ENCODE measurements at regions of chr2 and their contacts with region 1.

Region 1: DNA sequence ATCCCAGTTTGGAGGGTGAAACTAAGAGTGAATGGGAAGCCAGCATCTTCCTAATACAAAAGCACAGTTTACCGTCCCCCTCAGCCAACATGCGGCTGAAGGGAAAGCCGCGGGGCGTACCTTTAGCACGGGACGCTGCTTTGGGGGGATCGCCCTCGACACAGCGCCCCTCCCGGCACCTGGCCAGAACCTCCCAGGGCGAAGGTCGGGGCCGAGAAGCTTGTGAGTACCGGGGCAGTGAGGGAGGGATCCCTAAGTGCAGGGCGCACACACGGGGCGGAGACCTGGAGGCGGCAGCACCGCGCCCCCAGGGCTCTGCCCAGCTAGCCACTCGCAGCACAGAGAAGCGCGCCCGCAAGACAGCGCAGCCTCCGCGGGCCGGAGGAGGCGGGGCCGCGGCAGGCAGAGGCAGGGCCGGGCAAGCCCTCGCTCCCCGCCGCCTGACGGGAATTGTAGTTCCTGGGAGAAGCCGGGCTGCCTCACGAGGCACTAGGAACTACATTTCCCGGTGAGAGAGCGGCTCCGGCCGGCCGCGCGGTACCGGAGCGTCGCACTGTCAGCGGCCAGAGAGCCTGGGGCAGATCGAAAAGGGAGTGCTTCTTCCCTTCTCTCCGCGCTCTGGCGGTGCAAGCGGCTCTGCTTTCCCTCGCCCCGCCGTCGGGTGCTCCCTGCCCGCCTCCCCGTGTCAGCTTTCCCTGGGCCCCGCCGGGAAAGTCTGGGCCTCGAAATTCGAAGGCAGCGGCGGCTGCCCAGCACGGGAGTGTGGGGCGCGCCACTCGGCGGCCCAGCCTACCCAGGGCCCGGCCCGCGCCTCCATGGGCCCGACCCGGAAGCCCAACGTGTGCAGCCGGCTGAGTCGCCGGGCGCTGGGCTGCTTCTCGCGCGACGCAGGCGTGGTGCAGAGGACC is at the starts of genes DCAF17 and METTL8:
- DNase-seq: peak; percentile 98
- H3K4me3 ChIP-seq: peak within 1 kb of the TSS; percentile 73 to 97 (median 88)
- H3K27ac ChIP-seq: peak within 1 kb of the TSS; percentile 92
- H3K4me1 ChIP-seq: peaks cover 28% of the 10 kb centered on the region
- H3K27me3 ChIP-seq: no peaks in the 10 kb centered on the region
- CTCF ChIP-seq: peak in 1 of 2 donors; percentile 30
- total RNA-seq, gene DCAF17: 22.8 to 25.2 TPM
- total RNA-seq, gene METTL8: 49.7 to 57.0 TPM

Region 2: DNA sequence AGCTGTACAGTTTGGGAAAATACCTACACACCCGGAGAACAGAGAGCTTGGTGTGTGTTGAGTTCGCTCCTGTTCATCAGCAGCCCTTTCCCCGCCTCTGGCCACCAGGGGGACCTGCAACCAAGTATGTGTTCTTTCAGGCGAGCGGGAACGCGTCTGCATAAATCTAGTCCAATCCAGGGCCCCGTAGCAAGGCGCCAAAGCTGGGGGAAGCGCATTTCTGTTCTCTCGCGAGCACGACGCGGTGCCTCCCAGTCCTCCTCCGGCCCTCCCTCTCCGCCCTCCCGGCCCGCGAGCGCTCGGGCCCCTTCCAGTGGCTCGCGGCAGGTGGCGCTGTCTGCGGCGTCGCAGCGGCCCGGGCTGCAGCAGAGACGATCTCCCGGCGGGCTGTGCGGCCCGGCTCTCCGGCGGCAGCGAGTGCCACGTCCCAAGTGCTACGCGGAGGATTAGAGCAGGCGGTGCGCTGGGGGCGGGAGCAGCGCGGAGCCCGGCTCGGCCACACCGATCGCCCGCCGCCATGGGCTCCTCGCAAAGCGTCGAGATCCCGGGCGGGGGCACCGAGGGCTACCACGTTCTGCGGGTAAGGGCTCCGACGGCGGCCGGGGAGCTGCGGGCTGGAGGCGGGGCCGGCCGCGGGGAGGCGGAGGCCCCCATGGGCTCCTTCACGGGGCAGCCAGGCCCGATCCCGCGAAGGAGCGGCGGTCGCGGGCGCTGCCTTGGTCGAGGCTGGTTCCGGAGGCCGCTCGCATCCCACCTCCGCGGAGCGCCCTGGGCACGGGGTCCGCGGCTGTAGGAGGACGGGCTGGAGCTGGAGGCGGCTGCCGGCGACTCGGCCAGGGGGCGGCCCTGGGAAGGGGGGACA is 505.0 kb before region 1 on chr2 and contains the start of gene GORASP2:
- CTCF ChIA-PET with region 1: interaction called, 3 read pairs
- dilution Hi-C with region 1: no loop called
- in situ Hi-C with region 1: no loop called
- intact Hi-C with region 1: loop called (anchors 5 kb)
- DNase-seq: peak; percentile 99
- H3K4me3 ChIP-seq: peak within 1 kb of the TSS; percentile 54 to 86 (median 85)
- H3K27ac ChIP-seq: peak within 1 kb of the TSS; percentile 89
- H3K4me1 ChIP-seq: peaks cover 14% of the 10 kb centered on the region
- H3K27me3 ChIP-seq: no peaks in the 10 kb centered on the region
- CTCF ChIP-seq: peak; percentile 85
- total RNA-seq, gene GORASP2: 63.3 to 94.9 TPM

Region 3: GRCh38 chr2:170973492-170974303 is 460.3 kb before region 1 on chr2:
- CTCF ChIA-PET with region 1: no interaction called
- dilution Hi-C with region 1: no loop called
- in situ Hi-C with region 1: loop called in 1 of 2 experiments (anchors 10 kb)
- intact Hi-C with region 1: loop called (anchors 5 kb)
- DNase-seq: peak; percentile 9
- H3K4me3 ChIP-seq: peak overlapping the region; percentile 51 to 69 (median 65)
- H3K27ac ChIP-seq: peak overlapping the region; percentile 16
- H3K4me1 ChIP-seq: peaks cover 15% of the 10 kb centered on the region
- H3K27me3 ChIP-seq: no peaks in the 10 kb centered on the region
- CTCF ChIP-seq: peak; percentile 68 to 75

Region 4: GRCh38 chr2:171046048-171046560 is 387.9 kb before region 1 on chr2:
- CTCF ChIA-PET with region 1: no interaction called
- dilution Hi-C with region 1: no loop called
- in situ Hi-C with region 1: no loop called
- intact Hi-C with region 1: no loop called
- DNase-seq: no peak
- H3K4me3 ChIP-seq: no peak overlapping the region
- H3K27ac ChIP-seq: no peak overlapping the region
- H3K4me1 ChIP-seq: no peaks in the 10 kb centered on the region
- H3K27me3 ChIP-seq: no peaks in the 10 kb centered on the region
- CTCF ChIP-seq: no peak

Region 5: DNA sequence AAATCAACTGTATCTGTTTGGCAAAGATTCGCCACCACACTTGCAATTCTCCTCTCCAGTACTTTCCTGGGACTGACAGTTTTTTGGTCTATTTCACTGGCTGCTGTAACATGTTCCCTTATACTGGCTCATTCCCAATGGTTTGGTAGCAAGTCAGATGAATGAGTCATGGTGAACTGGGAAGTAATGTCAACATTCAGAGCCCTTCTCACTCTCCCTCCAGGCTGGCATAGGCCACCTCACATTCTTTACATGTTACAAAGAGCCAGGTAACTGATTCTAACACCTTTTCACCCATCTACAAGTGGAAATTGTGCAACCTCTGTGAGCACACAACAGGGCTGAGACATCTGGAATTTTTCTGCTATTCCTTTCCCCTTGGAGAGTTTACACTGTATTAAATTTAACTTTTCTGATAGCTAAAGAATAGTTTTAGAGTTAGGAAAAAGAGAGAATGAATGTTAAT is 162.0 kb before region 1 on chr2:
- CTCF ChIA-PET with region 1: no interaction called
- dilution Hi-C with region 1: no loop called
- in situ Hi-C with region 1: no loop called
- intact Hi-C with region 1: loop called (anchors 1 kb)
- DNase-seq: peak; percentile 98
- H3K4me3 ChIP-seq: no peak overlapping the region
- H3K27ac ChIP-seq: peak overlapping the region; percentile 50
- H3K4me1 ChIP-seq: peaks cover 17% of the 10 kb centered on the region
- H3K27me3 ChIP-seq: no peaks in the 10 kb centered on the region
- CTCF ChIP-seq: no peak

Region 6: DNA sequence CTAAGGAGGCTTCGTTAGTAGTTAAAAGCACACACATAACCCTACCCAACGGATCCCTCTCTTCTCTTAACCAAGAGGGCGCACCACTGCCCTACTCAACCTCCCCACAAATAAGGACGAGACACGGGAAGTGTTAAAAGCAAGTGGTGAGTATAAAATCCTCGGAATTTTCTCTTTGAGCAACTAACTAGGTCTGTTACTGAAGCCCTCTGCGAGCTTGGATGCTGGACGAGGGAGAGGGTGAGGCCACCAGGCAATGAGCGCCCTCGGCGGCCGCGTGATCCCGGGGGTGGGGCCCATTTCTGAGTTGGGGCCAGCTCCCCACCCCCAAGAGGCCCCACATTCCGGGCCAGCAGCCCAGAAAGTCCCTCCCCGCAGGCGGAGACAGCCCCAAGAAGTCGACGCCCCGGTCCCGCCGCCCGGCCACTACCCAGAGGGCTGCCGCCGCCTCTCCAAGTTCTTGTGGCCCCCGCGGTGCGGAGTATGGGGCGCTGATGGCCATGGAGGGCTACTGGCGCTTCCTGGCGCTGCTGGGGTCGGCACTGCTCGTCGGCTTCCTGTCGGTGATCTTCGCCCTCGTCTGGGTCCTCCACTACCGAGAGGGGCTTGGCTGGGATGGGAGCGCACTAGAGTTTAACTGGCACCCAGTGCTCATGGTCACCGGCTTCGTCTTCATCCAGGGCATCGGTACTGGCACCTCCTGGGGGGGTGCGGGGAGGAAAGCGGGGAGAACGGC is 88.2 kb after region 1 on chr2 and contains the start of gene CYBRD1:
- CTCF ChIA-PET with region 1: no interaction called
- dilution Hi-C with region 1: no loop called
- in situ Hi-C with region 1: no loop called
- intact Hi-C with region 1: loop called (anchors 10 kb)
- DNase-seq: peak; percentile 44
- H3K4me3 ChIP-seq: peak within 1 kb of the TSS; percentile 74 to 83 (median 77)
- H3K27ac ChIP-seq: no peak within 1 kb of the TSS
- H3K4me1 ChIP-seq: peaks cover 24% of the 10 kb centered on the region
- H3K27me3 ChIP-seq: no peaks in the 10 kb centered on the region
- CTCF ChIP-seq: no peak
- total RNA-seq, gene CYBRD1: 25.6 to 62.8 TPM

Region 7: GRCh38 chr2:171553858-171554257 is 119.8 kb after region 1 on chr2:
- CTCF ChIA-PET with region 1: no interaction called
- dilution Hi-C with region 1: no loop called
- in situ Hi-C with region 1: no loop called
- intact Hi-C with region 1: loop called (anchors 5 kb)
- DNase-seq: no peak
- H3K4me3 ChIP-seq: no peak overlapping the region
- H3K27ac ChIP-seq: no peak overlapping the region
- H3K4me1 ChIP-seq: peaks cover 7% of the 10 kb centered on the region
- H3K27me3 ChIP-seq: no peaks in the 10 kb centered on the region
- CTCF ChIP-seq: no peak